A673 (cell line): ENCODE measurements at regions of chr7 and their contacts with region 1.

Region 1: DNA sequence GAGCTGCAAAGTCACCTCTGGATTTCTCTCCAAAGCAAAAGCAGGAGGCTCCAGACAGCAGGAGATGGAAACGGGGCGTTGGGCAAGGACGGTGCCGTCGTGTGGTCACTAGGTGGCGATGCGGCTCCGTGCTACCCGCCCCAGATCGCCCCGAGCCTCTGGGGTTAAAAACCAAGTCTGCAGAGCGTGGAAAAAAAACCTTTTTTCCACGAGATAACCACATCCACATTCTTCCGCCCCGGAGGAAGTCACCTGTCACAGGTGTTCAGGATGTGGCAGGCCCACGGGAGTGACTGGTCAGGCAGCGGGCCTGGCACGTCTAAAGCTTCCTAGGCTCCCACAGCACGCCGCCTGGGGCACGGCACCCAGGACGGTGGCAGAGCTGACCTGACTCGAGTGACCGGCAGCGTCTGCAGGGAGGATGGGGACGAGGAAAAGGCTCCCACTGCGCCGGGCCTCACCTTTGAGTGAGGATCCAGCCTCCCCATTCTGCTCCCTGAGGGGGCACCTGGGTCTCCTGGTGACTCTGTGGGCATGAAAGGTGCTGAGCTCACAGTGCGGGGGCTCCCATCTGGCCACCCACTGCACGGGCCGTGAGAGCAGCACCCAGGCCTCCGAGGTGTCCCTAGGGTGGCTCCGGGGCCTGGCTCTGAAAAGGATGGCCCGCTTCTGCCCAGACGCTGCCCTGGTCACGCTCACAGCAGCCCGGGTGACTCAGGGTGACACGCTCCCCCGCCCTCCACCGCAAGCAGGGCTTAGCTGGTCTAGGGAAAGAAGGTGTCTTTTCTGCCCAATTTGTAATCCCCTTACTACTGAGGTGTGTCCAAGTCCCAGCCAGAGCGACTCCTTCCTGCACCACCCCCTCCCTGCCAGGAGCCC is 71.3 kb upstream of the TNRC18 start:
- DNase-seq: peak; percentile 80
- H3K4me3 ChIP-seq: no peak overlapping the region
- H3K27ac ChIP-seq: no peak overlapping the region
- H3K4me1 ChIP-seq: peaks cover 14% of the 10 kb centered on the region
- H3K27me3 ChIP-seq: no peaks in the 10 kb centered on the region
- CTCF ChIP-seq: peak; percentile 90

Region 2: GRCh38 chr7:5462216-5462615 is 32.7 kb before region 1 on chr7:
- CTCF ChIA-PET with region 1: no interaction called
- POLR2A ChIA-PET with region 1: no interaction called
- intact Hi-C with region 1: no loop called
- DNase-seq: no peak
- H3K4me3 ChIP-seq: no peak overlapping the region
- H3K27ac ChIP-seq: no peak overlapping the region
- H3K4me1 ChIP-seq: no peaks in the 10 kb centered on the region
- H3K27me3 ChIP-seq: no peaks in the 10 kb centered on the region
- CTCF ChIP-seq: no peak

Region 3: DNA sequence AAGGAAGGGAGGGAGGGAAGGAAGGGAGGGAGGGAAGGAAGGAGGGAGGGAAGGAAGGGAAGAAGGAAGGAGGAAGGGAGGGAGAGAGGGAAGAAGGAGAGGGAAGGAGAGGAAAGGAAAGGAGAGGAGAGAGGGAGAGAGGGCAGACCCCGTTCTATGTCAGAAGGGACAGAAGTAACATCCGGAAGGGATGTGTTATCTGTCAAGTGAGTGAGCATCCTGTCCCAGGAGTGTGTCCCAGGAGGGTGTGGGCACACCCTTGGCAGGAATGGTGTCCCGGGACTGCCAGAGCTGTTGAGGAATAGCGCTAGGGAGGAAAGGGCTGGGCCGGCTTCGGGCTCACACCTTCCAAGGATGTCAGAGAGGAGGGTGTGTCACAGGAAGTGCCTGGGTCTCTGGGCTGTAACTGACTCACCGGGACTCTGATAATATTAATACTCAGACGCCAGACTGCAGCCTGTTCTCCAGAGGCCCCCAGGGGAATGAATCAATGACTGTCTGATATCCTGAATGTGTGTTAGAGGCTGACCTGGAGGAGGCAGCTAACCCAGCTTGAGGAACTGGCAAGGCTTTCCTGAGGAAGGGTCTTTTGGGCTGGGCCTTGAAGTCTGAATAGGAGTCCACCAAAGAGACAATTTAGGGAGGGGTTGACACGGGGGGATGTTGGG is 54.3 kb after region 1 on chr7:
- CTCF ChIA-PET with region 1: interaction called, 10 read pairs
- POLR2A ChIA-PET with region 1: no interaction called
- intact Hi-C with region 1: no loop called
- DNase-seq: peak; percentile 39
- H3K4me3 ChIP-seq: no peak overlapping the region
- H3K27ac ChIP-seq: no peak overlapping the region
- H3K4me1 ChIP-seq: no peaks in the 10 kb centered on the region
- H3K27me3 ChIP-seq: no peaks in the 10 kb centered on the region
- CTCF ChIP-seq: no peak

Region 4: GRCh38 chr7:5557920-5558401 is 63.0 kb after region 1 on chr7:
- CTCF ChIA-PET with region 1: interaction called, 15 read pairs
- POLR2A ChIA-PET with region 1: no interaction called
- intact Hi-C with region 1: no loop called
- DNase-seq: no peak
- H3K4me3 ChIP-seq: no peak overlapping the region
- H3K27ac ChIP-seq: peak overlapping the region; percentile 51
- H3K4me1 ChIP-seq: peaks cover 10% of the 10 kb centered on the region
- H3K27me3 ChIP-seq: no peaks in the 10 kb centered on the region
- CTCF ChIP-seq: no peak

Region 5: DNA sequence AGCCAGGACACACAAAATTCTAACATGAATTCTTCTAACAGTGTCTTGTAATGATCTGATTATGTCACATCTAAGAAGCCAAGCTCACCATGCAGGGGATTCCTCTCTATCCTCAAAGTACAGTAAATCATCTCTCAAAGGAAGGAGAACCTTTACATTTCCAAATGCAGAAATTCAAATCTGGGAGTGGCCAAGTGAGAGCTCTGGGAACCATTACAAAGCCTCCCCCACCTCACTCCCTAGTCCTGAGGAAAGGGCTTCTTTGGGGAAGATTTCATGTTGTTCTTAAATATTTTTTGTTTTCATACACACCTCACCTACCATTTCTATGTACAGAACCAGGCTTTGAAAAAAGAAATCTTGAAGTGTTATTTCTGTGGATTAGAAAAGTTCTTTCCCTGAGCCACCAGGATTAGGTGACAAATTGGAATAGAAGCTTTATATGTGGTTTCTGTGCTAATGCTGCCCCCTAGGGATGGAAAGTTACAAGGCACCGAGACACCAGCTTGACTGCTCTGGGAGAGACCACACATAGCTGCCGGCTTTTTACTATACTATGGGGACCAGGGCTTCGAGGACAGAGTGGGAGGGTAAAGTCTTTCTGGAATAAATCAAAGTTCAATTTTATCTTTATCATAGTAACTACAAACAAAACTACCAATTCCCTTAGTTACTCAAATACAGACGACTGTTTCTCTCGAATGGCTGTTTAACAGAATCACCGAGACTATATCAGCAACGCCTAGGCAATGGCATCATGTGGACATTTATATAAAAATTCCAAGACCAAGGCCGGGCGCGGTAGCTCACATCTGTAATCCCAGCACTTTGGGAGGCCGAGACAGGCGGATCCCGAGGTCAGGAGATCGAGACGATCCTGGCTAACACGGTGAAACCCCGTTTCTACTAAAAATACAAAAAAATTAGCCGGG is 170.4 kb after region 1 on chr7:
- CTCF ChIA-PET with region 1: interaction called, 5 read pairs
- POLR2A ChIA-PET with region 1: no interaction called
- intact Hi-C with region 1: loop called (anchors 1 kb)
- DNase-seq: peak; percentile 90
- H3K4me3 ChIP-seq: no peak overlapping the region
- H3K27ac ChIP-seq: no peak overlapping the region
- H3K4me1 ChIP-seq: no peaks in the 10 kb centered on the region
- H3K27me3 ChIP-seq: no peaks in the 10 kb centered on the region
- CTCF ChIP-seq: peak; percentile 91

Region 6: GRCh38 chr7:5677538-5678294 is 182.8 kb after region 1 on chr7:
- CTCF ChIA-PET with region 1: no interaction called
- POLR2A ChIA-PET with region 1: no interaction called
- intact Hi-C with region 1: loop called (anchors 1 kb)
- DNase-seq: peak; percentile 74
- H3K4me3 ChIP-seq: no peak overlapping the region
- H3K27ac ChIP-seq: no peak overlapping the region
- H3K4me1 ChIP-seq: no peaks in the 10 kb centered on the region
- H3K27me3 ChIP-seq: no peaks in the 10 kb centered on the region
- CTCF ChIP-seq: peak; percentile 69

Region 7: GRCh38 chr7:5704534-5704922 is 209.6 kb after region 1 on chr7:
- CTCF ChIA-PET with region 1: interaction called, 3 read pairs
- POLR2A ChIA-PET with region 1: no interaction called
- intact Hi-C with region 1: loop called (anchors 2 kb)
- DNase-seq: peak; percentile 85
- H3K4me3 ChIP-seq: no peak overlapping the region
- H3K27ac ChIP-seq: no peak overlapping the region
- H3K4me1 ChIP-seq: peaks cover 7% of the 10 kb centered on the region
- H3K27me3 ChIP-seq: no peaks in the 10 kb centered on the region
- CTCF ChIP-seq: peak; percentile 94

Region 8: GRCh38 chr7:5892498-5892897 is 397.6 kb after region 1 on chr7:
- CTCF ChIA-PET with region 1: no interaction called
- POLR2A ChIA-PET with region 1: no interaction called
- intact Hi-C with region 1: no loop called
- DNase-seq: no peak
- H3K4me3 ChIP-seq: no peak overlapping the region
- H3K27ac ChIP-seq: no peak overlapping the region
- H3K4me1 ChIP-seq: no peaks in the 10 kb centered on the region
- H3K27me3 ChIP-seq: no peaks in the 10 kb centered on the region
- CTCF ChIP-seq: no peak